MCF 10A (cell line): ENCODE measurements at regions of chr7 and their contacts with region 1.

Region 1: GRCh38 chr7:65373608-65374351 is at the start of gene ZNF92:
- DNase-seq: peak; percentile 99
- H3K4me3 Mint-ChIP-seq: peak within 1 kb of the TSS; percentile 99
- H3K27ac Mint-ChIP-seq: peak within 1 kb of the TSS; percentile 98
- H3K4me1 Mint-ChIP-seq: peaks cover 8% of the 10 kb centered on the region
- H3K27me3 Mint-ChIP-seq: no peaks in the 10 kb centered on the region
- CTCF ChIP-seq: no peak
- total RNA-seq, gene ZNF92: 5.4 and 5.6 TPM in 2 replicates

Region 2: GRCh38 chr7:65448816-65449504 is 75.2 kb after region 1 on chr7:
- CTCF ChIA-PET with region 1: no interaction called
- POLR2A ChIA-PET with region 1: interaction called, 4 read pairs
- intact Hi-C with region 1: loop called (anchors 10 kb)
- DNase-seq: peak; percentile 64
- H3K4me3 Mint-ChIP-seq: no peak overlapping the region
- H3K27ac Mint-ChIP-seq: peak overlapping the region; percentile 25
- H3K4me1 Mint-ChIP-seq: peaks cover 8% of the 10 kb centered on the region
- H3K27me3 Mint-ChIP-seq: no peaks in the 10 kb centered on the region
- CTCF ChIP-seq: no peak